WTC11 (cell line): ENCODE measurements at regions of chr7 and their contacts with region 1.

Region 1: DNA sequence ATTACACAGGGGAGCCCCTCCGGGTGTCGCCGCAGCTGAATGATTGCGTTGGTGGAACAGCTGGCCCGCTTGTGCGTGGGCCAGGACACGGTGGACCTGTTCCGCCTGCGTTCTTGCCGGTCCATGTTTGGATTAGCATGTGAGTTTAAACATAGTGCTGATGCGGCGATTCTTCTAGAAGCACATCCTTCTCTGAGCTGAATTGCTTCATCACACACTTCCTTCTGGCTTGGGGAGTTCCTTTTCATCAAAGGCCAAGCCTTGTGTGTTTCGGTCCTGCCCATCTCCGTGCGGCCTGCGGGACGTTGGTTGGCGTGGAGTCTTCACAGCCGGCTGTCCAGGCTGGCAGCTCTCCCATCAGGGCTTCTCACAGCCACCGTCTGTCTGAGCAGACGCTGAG is 45.5 kb upstream of the SLC29A4 start:
- DNase-seq: no peak
- ATAC-seq: no peak
- H3K4me3 Mint-ChIP-seq: no peak overlapping the region
- H3K27ac Mint-ChIP-seq: no peak overlapping the region
- H3K4me1 Mint-ChIP-seq: peaks cover 5% of the 10 kb centered on the region
- H3K27me3 Mint-ChIP-seq: peaks cover 14% of the 10 kb centered on the region
- CTCF ChIP-seq: no peak

Region 2: GRCh38 chr7:5248201-5248885 is 11.1 kb after region 1 on chr7:
- CTCF ChIA-PET with region 1: interaction called, 35 read pairs
- POLR2A ChIA-PET with region 1: no interaction called
- DNase-seq: no peak
- ATAC-seq: no peak
- H3K4me3 Mint-ChIP-seq: no peak overlapping the region
- H3K27ac Mint-ChIP-seq: peak overlapping the region; percentile 60; the same call in 1 of the 2 replicates
- H3K4me1 Mint-ChIP-seq: peaks cover 7% of the 10 kb centered on the region
- H3K27me3 Mint-ChIP-seq: no peaks in the 10 kb centered on the region; the same call in 1 of the 2 replicates
- CTCF ChIP-seq: no peak

Region 3: GRCh38 chr7:5284304-5285281 is 47.3 kb after region 1 on chr7:
- CTCF ChIA-PET with region 1: interaction called, 68 read pairs
- POLR2A ChIA-PET with region 1: interaction called, 4 read pairs
- DNase-seq: peak; percentile 89
- ATAC-seq: peak; percentile 91
- H3K4me3 Mint-ChIP-seq: peak overlapping the region; percentile 57
- H3K27ac Mint-ChIP-seq: no peak overlapping the region
- H3K4me1 Mint-ChIP-seq: 0 out of 2 replicates have a peak, but pooled peaks cover 2% of the 10 kb centered on the region
- H3K27me3 Mint-ChIP-seq: peaks cover 19% of the 10 kb centered on the region
- CTCF ChIP-seq: no peak

Region 4: DNA sequence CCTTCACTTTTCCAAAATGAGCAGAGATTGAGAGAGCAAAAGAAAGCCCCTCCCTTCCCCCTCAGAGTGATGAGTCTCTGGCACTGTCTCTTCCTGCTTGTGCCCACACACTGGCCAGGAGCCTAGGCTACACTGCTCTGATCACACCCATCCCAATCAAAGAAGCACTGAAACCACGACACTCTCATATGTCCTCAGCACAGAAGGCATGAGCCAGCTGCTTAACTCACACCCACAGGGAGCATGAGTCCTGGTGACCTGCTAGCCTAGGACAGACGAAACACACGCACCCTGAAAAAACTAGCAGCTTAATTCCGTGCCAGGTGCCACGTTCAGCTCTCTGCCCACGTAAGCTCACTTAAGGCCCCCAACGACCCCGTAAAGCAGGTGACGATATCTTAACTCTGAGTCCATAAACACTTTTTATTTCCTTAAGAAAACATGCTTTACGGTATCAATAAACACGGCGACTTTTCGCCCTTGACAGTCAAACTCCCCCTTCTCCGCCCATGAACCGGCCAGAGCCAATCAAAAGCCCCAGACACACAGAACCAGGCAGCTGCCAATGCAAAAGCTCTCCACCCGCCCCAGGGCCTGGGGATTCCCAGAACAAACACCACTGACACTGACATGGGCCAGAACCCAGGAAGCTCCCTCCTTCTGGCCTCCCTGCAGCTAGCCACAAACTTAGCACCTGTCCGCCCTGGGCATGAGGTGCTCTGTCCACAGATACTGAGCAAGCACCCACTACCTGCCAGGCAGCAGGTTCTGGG is 117.4 kb after region 1 on chr7:
- CTCF ChIA-PET with region 1: interaction called, 11 read pairs
- POLR2A ChIA-PET with region 1: interaction called, 3 read pairs
- DNase-seq: peak; percentile 58
- ATAC-seq: peak; percentile 63
- H3K4me3 Mint-ChIP-seq: no peak overlapping the region
- H3K27ac Mint-ChIP-seq: peak overlapping the region; percentile 6; the same call in 1 of the 2 replicates
- H3K4me1 Mint-ChIP-seq: peaks cover 31% of the 10 kb centered on the region
- H3K27me3 Mint-ChIP-seq: peaks cover 40% of the 10 kb centered on the region
- CTCF ChIP-seq: no peak

Region 5: DNA sequence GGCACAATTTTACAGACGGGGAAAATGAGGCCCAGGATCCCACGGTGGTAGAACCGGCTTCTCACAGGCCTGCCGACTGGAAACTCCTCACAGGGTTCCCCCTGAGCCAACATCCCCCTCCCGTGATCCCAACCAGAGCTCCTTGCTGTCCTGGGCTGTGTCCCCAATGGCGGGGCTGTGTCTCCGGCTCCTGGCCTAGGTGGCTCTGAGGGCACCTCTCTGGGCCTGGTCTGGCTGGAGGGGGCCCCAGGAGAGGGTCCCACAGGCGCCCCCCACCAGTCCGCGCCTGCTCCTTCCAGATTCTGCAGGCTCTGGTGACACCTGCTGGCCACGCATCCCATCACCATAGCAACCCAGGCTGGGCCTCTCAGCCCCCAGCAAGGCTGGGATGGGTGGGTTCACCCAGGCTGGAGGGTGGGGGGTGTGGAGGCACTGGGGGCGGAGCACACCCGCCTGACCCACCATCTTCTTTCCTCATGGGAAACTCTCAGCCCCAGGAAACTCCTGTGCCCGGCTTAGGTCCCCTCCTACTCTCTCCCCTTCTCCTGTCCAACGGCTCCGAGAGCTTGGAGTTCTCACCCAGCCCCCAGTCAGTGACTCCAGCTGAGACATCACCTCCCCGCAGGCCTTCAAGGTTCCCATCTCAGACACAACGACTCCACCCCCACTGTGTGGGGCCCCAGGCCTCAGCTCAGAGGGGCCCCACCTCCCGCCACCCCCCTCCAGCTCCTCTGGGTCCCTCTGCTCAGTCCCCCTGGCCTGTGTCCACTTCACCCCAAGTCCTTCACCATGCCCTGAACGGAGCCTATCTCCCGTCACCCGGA is 213.5 kb after region 1 on chr7:
- CTCF ChIA-PET with region 1: interaction called, 53 read pairs
- POLR2A ChIA-PET with region 1: interaction called, 3 read pairs
- DNase-seq: peak; percentile 79
- ATAC-seq: peak; percentile 84
- H3K4me3 Mint-ChIP-seq: no peak overlapping the region
- H3K27ac Mint-ChIP-seq: no peak overlapping the region
- H3K4me1 Mint-ChIP-seq: peaks cover 6% of the 10 kb centered on the region
- H3K27me3 Mint-ChIP-seq: peaks cover 3% of the 10 kb centered on the region; the same call in 1 of the 2 replicates
- CTCF ChIP-seq: peak; percentile 56